Activated naive CD4-positive, alpha-beta T cell treated with anti-CD3 and anti-CD28 coated beads for 36 hours (primary cell): ENCODE measurements at regions of chr18 and their contacts with region 1.

Region 1: DNA sequence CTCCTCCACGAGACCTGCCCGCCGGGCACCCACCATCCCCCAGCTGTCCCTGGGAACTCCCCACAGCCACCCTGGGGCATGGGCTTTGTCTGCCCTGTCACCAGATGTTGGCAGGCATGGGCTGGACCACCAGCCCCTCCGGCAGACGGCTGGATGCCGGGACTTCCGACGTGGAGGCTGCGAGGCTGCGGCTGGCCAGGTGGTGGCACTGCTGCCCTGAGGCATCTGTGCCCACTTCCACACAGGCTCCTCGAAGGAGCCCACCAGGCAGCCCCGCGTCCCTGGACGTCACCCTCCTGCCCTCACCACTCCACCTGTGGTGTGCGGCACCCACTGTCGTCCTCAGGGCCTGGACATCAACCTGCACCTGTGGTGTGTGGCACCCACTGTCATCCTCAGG is 319.9 kb upstream of the SALL3 start:
- DNase-seq: peak; percentile 13
- H3K4me3 Mint-ChIP-seq: no peak overlapping the region
- H3K27ac Mint-ChIP-seq: no peak overlapping the region
- H3K4me1 Mint-ChIP-seq: no peaks in the 10 kb centered on the region
- H3K27me3 Mint-ChIP-seq: no peaks in the 10 kb centered on the region

Region 2: GRCh38 chr18:78558948-78559347 is 100.8 kb before region 1 on chr18:
- CTCF ChIA-PET with region 1: no interaction called
- intact Hi-C with region 1: loop called (anchors 5 kb)
- DNase-seq: no peak
- H3K4me3 Mint-ChIP-seq: no peak overlapping the region
- H3K27ac Mint-ChIP-seq: no peak overlapping the region
- H3K4me1 Mint-ChIP-seq: no peaks in the 10 kb centered on the region
- H3K27me3 Mint-ChIP-seq: no peaks in the 10 kb centered on the region

Region 3: DNA sequence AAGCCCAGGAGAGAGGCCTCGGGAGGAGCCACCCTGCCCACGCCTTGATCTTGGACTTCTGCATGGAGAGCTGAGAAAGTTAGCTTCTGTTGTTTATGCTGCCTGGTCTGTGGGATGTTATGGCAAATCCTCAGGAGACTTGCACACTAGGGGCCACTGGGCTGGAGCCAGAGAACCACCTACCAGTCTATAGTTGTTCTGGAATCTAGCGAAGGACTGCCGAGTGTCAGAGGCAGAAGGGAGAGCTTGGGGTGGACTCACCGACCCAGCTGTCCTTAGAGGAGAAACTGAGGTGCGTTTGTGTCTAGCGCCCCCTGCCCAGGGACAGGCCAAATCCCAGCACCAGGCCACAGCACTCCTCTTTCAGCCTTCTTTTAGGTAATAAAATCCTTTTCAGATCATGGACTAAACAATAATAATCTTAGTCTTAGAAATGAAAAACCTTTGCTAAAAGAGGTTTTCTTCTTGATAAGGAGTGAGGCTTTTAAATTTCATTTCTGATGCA is 78.9 kb before region 1 on chr18:
- CTCF ChIA-PET with region 1: no interaction called
- intact Hi-C with region 1: no loop called
- DNase-seq: no peak
- H3K4me3 Mint-ChIP-seq: no peak overlapping the region
- H3K27ac Mint-ChIP-seq: no peak overlapping the region
- H3K4me1 Mint-ChIP-seq: no peaks in the 10 kb centered on the region
- H3K27me3 Mint-ChIP-seq: no peaks in the 10 kb centered on the region